HepG2 (cell line): ENCODE measurements at regions of chr5 and their contacts with region 1.

Region 1: GRCh38 chr5:179495906-179496455 is 54.4 kb upstream of the RUFY1 start:
- DNase-seq: no peak
- ATAC-seq: peak; percentile 65
- H3K4me3 ChIP-seq: no peak overlapping the region
- H3K27ac ChIP-seq: no peak overlapping the region
- H3K4me1 ChIP-seq: peaks cover 7% of the 10 kb centered on the region
- H3K27me3 ChIP-seq: peaks cover 3 to 39% of the 10 kb centered on the region in 2 experiments; a peak in 4 of 5 replicates
- CTCF ChIP-seq: peak; percentile 73
- EP300 ChIP-seq: no peak
- POLR2A ChIP-seq: no peak
- RAD21 ChIP-seq: 0 out of 2 replicates have a peak, but pooled peaks have one; percentile 23

Region 2: GRCh38 chr5:179166886-179167841 is 328.8 kb before region 1 on chr5:
- CTCF ChIA-PET with region 1: interaction called, 13 read pairs
- POLR2A ChIA-PET with region 1: no interaction called
- in situ Hi-C with region 1: loop called (anchors 5 kb)
- intact Hi-C with region 1: no loop called
- DNase-seq: no peak
- ATAC-seq: peak; percentile 80
- H3K4me3 ChIP-seq: peak overlapping the region in 1 of 3 experiments; percentile 50; a peak in 1 of 6 replicates
- H3K27ac ChIP-seq: no peak overlapping the region
- H3K4me1 ChIP-seq: no peaks in the 10 kb centered on the region
- H3K27me3 ChIP-seq: peaks cover 3 to 12% of the 10 kb centered on the region in 2 experiments; a peak in 3 of 5 replicates
- CTCF ChIP-seq: peak; percentile 76
- EP300 ChIP-seq: no peak
- POLR2A ChIP-seq: no peak
- RAD21 ChIP-seq: peak; percentile 97

Region 3: GRCh38 chr5:179275941-179276837 is 219.8 kb before region 1 on chr5:
- CTCF ChIA-PET with region 1: no interaction called
- POLR2A ChIA-PET with region 1: no interaction called
- in situ Hi-C with region 1: no loop called
- intact Hi-C with region 1: loop called (anchors 5 kb)
- DNase-seq: peak; percentile 26
- ATAC-seq: peak; percentile 15
- H3K4me3 ChIP-seq: no peak overlapping the region
- H3K27ac ChIP-seq: no peak overlapping the region
- H3K4me1 ChIP-seq: peaks cover 22% of the 10 kb centered on the region
- H3K27me3 ChIP-seq: no peaks in the 10 kb centered on the region; a peak in 1 of 5 replicates
- CTCF ChIP-seq: no peak
- EP300 ChIP-seq: no peak
- POLR2A ChIP-seq: no peak
- RAD21 ChIP-seq: no peak